ENCODE measurements at regions of chr4 and their contacts with region 1.

Region 1: GRCh38 chr4:142405021-142405694 is 440.9 kb downstream of the INPP4B start:
- DNase-seq: peak; percentile 77
- H3K4me3 Mint-ChIP-seq: peak overlapping the region; percentile 92
- H3K27ac Mint-ChIP-seq: peak overlapping the region; percentile 97
- H3K4me1 Mint-ChIP-seq: peaks cover 40% of the 10 kb centered on the region
- H3K27me3 Mint-ChIP-seq: no peaks in the 10 kb centered on the region

Region 2: DNA sequence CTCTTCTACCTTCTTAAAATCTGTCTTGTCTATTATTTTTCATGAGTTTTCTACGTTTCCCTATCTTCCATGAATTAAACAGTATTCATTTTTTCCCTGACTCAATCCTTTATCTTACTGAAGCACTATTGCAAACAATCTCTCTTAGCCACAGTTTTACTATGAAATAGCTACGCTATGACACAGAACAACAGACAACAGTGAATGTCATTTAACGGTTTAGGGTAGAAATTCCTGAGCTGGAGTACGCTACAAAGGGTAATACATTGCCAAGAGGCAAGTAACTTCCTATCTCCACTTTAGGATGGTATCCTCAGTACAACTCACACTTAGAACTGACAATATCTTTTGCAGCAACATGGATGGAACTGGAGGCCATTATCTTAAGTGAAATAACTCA is 111.6 kb before region 1 on chr4:
- CTCF ChIA-PET with region 1: interaction called, 4 read pairs
- POLR2A ChIA-PET with region 1: no interaction called
- intact Hi-C with region 1: loop called (anchors 2 kb)
- DNase-seq: no peak
- H3K4me3 Mint-ChIP-seq: no peak overlapping the region
- H3K27ac Mint-ChIP-seq: peak overlapping the region; percentile 32
- H3K4me1 Mint-ChIP-seq: peaks cover 76% of the 10 kb centered on the region
- H3K27me3 Mint-ChIP-seq: no peaks in the 10 kb centered on the region

Region 3: GRCh38 chr4:142379277-142380057 is 25.7 kb before region 1 on chr4:
- CTCF ChIA-PET with region 1: interaction called, 9 read pairs
- POLR2A ChIA-PET with region 1: interaction called, 97 read pairs
- intact Hi-C with region 1: loop called (anchors 1 kb)
- DNase-seq: no peak
- H3K4me3 Mint-ChIP-seq: no peak overlapping the region
- H3K27ac Mint-ChIP-seq: peak overlapping the region; percentile 85
- H3K4me1 Mint-ChIP-seq: peaks cover 78% of the 10 kb centered on the region
- H3K27me3 Mint-ChIP-seq: no peaks in the 10 kb centered on the region

Region 4: GRCh38 chr4:142549726-142550463 is 144.7 kb after region 1 on chr4:
- CTCF ChIA-PET with region 1: interaction called, 3 read pairs
- POLR2A ChIA-PET with region 1: interaction called, 18 read pairs
- intact Hi-C with region 1: no loop called
- DNase-seq: no peak
- H3K4me3 Mint-ChIP-seq: no peak overlapping the region
- H3K27ac Mint-ChIP-seq: peak overlapping the region; percentile 51
- H3K4me1 Mint-ChIP-seq: peaks cover 72% of the 10 kb centered on the region
- H3K27me3 Mint-ChIP-seq: no peaks in the 10 kb centered on the region

Region 5: DNA sequence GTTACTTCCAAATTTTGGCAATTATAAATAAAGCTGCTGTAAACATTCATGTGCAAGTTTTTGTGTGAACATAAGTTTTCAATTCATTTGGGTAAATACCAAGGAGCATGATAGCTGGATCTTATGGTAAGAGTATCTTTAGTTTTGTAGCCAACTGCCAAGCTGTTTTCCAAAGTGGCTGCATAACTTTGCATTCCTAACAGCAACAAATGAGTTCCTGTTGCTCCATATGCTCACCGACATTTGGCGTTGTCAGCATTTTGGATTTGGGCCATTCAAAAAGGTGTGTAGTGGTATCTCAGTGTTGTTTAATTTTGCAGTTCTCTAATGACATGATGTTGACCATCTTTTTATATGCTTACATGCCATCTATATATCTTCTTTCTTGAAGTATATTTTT is 232.5 kb after region 1 on chr4:
- CTCF ChIA-PET with region 1: no interaction called
- POLR2A ChIA-PET with region 1: no interaction called
- intact Hi-C with region 1: no loop called
- DNase-seq: no peak
- H3K4me3 Mint-ChIP-seq: no peak overlapping the region
- H3K27ac Mint-ChIP-seq: no peak overlapping the region
- H3K4me1 Mint-ChIP-seq: no peaks in the 10 kb centered on the region
- H3K27me3 Mint-ChIP-seq: no peaks in the 10 kb centered on the region

Region 6: DNA sequence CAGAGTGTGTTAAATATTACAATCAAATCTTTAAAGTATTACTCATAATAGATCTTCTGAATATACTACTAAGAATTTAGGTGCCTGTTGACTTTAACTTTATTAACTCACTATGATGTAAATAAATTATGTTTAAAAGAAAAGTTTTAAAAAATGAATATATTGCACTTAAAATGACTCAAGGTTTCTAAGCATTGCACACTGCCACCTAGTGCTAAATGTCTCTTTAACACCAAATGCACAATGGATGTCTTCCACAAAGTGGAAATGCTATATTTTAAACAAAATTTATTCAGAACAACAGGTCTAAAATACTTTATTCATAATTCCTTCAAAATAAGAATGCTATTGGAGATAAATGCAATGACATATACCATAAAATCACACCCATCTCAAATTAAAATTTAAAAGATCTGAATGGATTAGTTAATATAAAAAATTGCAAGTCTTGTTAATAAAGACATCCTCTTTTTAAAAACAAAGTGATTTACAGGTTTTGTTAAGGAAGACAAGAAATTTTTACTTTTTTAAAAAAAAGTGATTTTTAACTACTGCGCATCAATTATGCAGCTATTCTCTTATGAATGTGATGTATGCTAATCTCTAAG is 435.5 kb after region 1 on chr4:
- CTCF ChIA-PET with region 1: no interaction called
- POLR2A ChIA-PET with region 1: no interaction called
- intact Hi-C with region 1: loop called (anchors 1 kb)
- DNase-seq: no peak
- H3K4me3 Mint-ChIP-seq: no peak overlapping the region
- H3K27ac Mint-ChIP-seq: no peak overlapping the region
- H3K4me1 Mint-ChIP-seq: peaks cover 21% of the 10 kb centered on the region
- H3K27me3 Mint-ChIP-seq: peaks cover 2% of the 10 kb centered on the region

Measured in activated CD4-positive, alpha-beta memory T cell treated with anti-CD3 and anti-CD28 coated beads for 36 hours (primary cell).